Mammary epithelial cell (primary cell): ENCODE measurements at regions of chr12 and their contacts with region 1.

Region 1: GRCh38 chr12:107402041-107403022 is 283.3 kb upstream of the PWP1 start:
- DNase-seq: peak; percentile 75
- H3K4me3 ChIP-seq: no peak overlapping the region
- H3K27ac ChIP-seq: no peak overlapping the region
- H3K4me1 ChIP-seq: peaks cover 6% of the 10 kb centered on the region
- H3K27me3 ChIP-seq: no peaks in the 10 kb centered on the region
- CTCF ChIP-seq: peak; percentile 89 to 93

Region 2: DNA sequence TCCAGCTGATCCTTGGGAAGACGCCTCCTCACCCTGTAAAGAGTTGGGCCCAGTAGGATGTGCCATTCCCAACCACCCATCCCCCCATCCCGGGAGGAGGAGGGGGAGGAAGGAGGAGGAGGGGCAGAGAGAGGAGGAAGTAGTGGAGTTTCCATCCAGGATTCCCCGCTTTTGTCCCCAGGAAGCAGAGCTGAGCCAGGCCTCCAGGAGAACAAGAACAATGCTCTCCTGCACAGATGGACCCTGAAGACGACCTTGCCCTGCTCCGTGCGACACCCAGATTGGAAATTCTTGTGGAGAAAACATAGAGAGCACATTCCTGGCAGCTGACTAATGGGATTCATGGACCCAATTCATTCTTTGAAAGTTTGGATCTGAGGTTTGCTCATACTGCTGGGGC is 176.7 kb before region 1 on chr12:
- CTCF ChIA-PET with region 1: no interaction called
- dilution Hi-C with region 1: no loop called
- in situ Hi-C with region 1: no loop called
- intact Hi-C with region 1: loop called (anchors 1 kb)
- DNase-seq: no peak
- H3K4me3 ChIP-seq: no peak overlapping the region
- H3K27ac ChIP-seq: no peak overlapping the region
- H3K4me1 ChIP-seq: no peaks in the 10 kb centered on the region
- H3K27me3 ChIP-seq: no peaks in the 10 kb centered on the region
- CTCF ChIP-seq: no peak

Region 3: DNA sequence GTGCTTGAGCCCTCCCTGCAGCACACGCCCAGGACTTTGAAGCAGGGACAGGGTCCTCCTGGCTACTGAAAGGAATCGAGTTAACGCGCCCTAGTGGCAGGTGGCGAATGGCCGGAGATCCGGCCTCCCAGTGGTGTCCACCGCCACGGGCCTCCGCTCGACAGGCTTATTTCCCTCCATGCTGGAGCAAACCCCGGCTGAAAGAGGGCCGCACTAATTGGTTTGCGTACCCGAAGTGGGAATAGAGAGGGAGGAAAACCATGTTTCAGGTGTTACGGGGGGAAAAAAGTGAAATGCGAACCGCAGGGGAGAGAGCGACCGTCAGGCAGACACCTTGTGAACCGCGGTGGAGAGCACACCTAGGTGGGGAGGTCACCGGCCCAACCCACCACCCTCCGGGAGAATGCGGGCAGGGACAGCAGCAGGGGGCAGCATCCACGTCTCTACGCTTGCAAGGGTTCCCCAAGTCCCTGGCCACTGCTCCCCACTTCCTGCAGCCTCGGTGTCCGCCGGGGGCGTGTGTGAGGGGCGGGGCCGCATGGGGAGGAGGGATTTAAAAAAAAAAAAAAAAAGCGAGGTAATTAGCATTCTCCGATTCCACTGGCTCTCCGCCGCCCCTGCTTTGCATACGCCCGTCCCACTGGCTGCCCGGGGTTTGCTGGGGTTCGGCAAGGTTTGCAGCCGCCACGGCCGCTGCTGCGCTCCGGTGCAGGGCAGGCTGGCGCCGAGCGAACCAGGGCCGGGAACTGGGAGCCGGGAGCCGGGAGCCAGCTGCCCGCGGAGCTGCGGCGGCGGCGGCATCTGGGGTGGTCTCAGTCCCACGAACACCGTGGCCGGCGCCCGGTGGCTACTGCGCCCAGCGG is 84.3 kb before region 1 on chr12:
- CTCF ChIA-PET with region 1: interaction called, 3 read pairs
- dilution Hi-C with region 1: no loop called
- in situ Hi-C with region 1: no loop called
- intact Hi-C with region 1: loop called (anchors 1 kb)
- DNase-seq: peak; percentile 94
- H3K4me3 ChIP-seq: peak overlapping the region; percentile 57 to 82 (median 76)
- H3K27ac ChIP-seq: peak overlapping the region; percentile 18
- H3K4me1 ChIP-seq: peaks cover 20% of the 10 kb centered on the region
- H3K27me3 ChIP-seq: peaks cover 2% of the 10 kb centered on the region
- CTCF ChIP-seq: peak; percentile 15 to 57

Region 4: GRCh38 chr12:107372229-107372658 is 30.1 kb before region 1 on chr12:
- CTCF ChIA-PET with region 1: no interaction called
- dilution Hi-C with region 1: no loop called
- in situ Hi-C with region 1: no loop called
- intact Hi-C with region 1: loop called (anchors 1 kb)
- DNase-seq: peak; percentile 89
- H3K4me3 ChIP-seq: no peak overlapping the region
- H3K27ac ChIP-seq: peak overlapping the region; percentile 47
- H3K4me1 ChIP-seq: peaks cover 18% of the 10 kb centered on the region
- H3K27me3 ChIP-seq: no peaks in the 10 kb centered on the region
- CTCF ChIP-seq: peak in 1 of 2 donors; percentile 11

Region 5: DNA sequence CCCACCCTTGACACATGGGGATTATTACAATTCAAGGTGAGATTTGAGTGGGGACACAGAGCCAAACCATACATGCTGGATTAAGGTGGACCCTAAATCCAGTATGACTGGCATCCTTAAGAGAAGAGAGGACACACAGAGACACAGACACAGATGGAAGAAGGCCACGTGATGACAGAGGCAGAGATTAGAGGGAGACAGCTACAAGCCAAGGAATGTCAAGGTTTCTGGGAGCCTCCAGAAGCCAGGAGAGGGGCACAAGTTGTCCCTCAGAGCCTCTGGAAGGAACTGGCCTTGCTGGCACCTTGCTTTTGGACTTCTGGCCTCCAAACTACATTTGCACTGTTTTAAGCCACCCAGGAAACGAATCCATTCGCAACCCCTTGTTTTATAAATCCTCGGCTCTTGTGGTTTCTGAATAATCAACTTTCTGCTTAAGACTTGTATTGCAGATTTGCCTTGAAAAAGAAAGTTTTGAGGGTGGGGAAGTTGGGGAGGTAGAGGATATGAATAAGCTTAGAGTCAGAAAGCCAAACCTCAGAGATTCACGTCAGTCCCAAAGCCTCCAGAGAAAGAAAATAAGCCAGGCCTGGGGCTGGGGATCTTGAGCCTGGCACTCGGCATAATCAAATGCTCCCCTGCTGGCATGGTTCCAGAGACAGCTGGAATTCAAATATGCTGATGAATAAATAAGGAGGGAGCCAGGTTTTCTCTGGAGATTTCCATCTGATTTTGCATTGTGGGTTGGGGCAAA is 59.1 kb after region 1 on chr12:
- CTCF ChIA-PET with region 1: no interaction called
- dilution Hi-C with region 1: loop called (anchors 5 kb)
- in situ Hi-C with region 1: no loop called
- intact Hi-C with region 1: no loop called
- DNase-seq: peak; percentile 91
- H3K4me3 ChIP-seq: no peak overlapping the region
- H3K27ac ChIP-seq: peak overlapping the region; percentile 70
- H3K4me1 ChIP-seq: peaks cover 22% of the 10 kb centered on the region
- H3K27me3 ChIP-seq: no peaks in the 10 kb centered on the region
- CTCF ChIP-seq: no peak

Region 6: GRCh38 chr12:107564946-107565345 is 162.6 kb after region 1 on chr12:
- CTCF ChIA-PET with region 1: interaction called, 3 read pairs
- dilution Hi-C with region 1: no loop called
- in situ Hi-C with region 1: no loop called
- intact Hi-C with region 1: loop called (anchors 1 kb)
- DNase-seq: peak; percentile 23
- H3K4me3 ChIP-seq: no peak overlapping the region
- H3K27ac ChIP-seq: no peak overlapping the region
- H3K4me1 ChIP-seq: peaks cover 20% of the 10 kb centered on the region
- H3K27me3 ChIP-seq: no peaks in the 10 kb centered on the region
- CTCF ChIP-seq: peak; percentile 71 to 87